ENCODE measurements at regions of chr13 and their contacts with region 1.

Region 1: DNA sequence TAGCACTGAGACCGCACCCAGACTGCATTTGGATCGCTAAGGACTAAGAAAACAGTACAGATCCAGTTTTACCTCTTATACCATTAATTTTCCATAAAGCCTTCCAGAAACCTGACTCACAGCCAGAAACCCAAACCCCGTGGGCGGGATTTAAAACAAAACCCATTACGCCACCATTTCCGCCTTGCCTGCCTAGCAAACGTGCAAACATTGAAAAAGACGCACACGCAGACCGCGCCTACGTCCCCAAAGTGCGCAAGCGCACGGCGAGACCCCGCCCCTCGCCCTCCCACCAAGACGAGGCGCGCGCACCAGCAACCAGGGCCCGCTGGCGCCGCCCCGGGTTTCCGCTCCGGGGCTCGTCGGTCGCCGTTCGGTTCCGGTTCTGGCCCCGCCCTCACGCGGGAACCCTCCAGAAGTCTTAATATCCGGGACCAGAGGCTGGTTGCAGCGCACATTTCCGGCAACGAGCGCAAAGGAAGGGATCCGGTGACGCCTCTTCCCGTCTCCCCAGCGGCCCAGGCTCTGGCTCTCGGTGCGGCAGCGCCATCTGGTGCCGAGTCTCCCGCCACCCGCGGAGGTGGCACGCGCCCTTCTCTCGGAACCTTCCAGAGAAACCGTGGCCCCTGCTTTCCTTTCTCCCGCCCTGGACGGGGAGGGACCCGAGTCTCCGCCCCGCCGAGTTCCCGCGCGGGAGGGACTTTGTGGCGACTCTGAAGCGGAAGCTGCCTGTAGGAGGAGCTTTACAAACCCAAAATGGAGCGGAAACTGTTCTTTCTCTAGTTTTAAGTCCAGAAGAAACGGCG is 256.9 kb upstream of the STARD13 start:
- DNase-seq: peak; percentile 95 to 100 (median 98)
- ATAC-seq: peak; percentile 79
- H3K4me3 ChIP-seq: peak overlapping the region; percentile 69
- H3K4me3 Mint-ChIP-seq: peak overlapping the region; percentile 99
- H3K27ac ChIP-seq: peak overlapping the region; percentile 97 to 98
- H3K27ac Mint-ChIP-seq: peak overlapping the region; percentile 98
- H3K4me1 ChIP-seq: peaks cover 31% of the 10 kb centered on the region
- H3K4me1 Mint-ChIP-seq: peaks cover 56% of the 10 kb centered on the region
- H3K27me3 ChIP-seq: no peaks in the 10 kb centered on the region
- H3K27me3 Mint-ChIP-seq: no peaks in the 10 kb centered on the region
- CTCF ChIP-seq: peak; percentile 84

Region 2: DNA sequence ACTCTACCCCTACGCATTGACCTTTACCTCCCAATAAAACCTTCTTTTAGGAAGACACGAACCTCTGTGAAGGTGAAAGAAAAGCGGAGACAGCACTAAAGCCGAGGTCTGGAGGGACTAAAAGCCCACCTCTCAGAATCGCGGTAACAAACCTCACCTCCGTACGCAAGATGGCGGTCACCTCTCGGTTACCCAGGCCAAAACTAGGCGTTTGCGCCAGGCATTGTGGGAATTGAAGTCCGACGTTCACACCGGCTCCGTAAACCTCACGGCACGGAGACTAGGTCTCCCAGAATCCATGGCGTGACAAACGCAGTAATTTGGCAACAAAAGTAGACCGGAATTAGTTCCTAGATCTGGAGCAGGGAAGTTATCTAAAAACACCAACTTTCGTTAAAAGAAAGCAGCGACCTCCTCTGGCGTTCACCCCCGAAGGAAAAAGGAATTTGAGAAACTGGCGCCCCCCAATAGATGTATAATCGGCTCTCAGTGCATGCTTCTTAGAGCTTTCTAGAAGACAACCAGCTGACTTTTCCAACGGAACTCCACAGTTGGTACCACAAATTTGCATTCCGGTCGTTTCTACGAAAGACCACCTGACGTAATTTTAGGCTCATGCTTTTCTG is 1003.8 kb before region 1 on chr13 and contains the start of gene N4BP2L2:
- CTCF ChIA-PET with region 1: interaction called, 6 read pairs
- POLR2A ChIA-PET with region 1: interaction called, 17 read pairs
- intact Hi-C with region 1: loop called (anchors 2 to 5 kb)
- DNase-seq: peak; percentile 82 to 97 (median 88)
- ATAC-seq: peak; percentile 96
- H3K4me3 ChIP-seq: peak within 1 kb of the TSS; percentile 81
- H3K4me3 Mint-ChIP-seq: peak within 1 kb of the TSS; percentile 100
- H3K27ac ChIP-seq: peak within 1 kb of the TSS; percentile 98
- H3K27ac Mint-ChIP-seq: peak within 1 kb of the TSS; percentile 100
- H3K4me1 ChIP-seq: peaks cover 18% of the 10 kb centered on the region
- H3K4me1 Mint-ChIP-seq: peaks cover 55% of the 10 kb centered on the region
- H3K27me3 ChIP-seq: no peaks in the 10 kb centered on the region
- H3K27me3 Mint-ChIP-seq: peaks cover 5% of the 10 kb centered on the region
- CTCF ChIP-seq: peak; percentile 33
- total RNA-seq, gene N4BP2L2: 171 TPM

Region 3: DNA sequence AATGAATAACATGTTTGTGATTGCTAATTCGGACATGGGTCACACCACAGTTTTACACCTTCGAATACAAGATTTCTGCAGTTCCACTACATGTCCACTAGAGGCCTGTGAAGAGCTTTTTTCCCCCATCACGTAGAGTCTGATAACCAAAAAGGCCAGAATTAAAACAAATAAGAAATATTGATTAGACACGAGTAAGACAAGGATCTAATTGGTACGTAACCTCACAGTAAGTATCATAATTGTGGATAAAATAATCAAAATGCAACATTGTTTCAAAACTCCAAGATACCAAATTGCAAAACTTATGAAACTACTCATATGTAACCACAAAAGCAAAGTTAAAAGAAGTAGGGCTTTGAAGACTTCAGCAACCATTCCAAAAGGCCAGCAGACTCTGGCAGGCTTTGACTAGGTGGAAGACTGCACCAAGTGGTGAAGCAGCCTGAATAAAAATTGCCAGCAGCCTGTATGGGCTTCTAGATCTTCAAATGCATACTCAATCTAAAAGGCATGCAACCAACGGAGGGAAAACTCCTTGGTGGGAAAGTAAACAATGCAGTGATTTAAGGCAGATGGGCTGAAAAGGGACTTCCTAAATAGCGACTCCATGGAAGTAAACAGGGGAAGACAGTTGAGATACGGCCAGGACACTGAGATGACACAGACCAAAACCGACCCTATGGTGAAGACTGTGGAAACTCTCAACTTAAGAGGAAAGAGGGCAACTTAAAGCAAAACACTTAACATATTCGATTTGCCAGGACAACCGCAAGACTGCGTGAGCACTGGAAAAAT is 313.6 kb before region 1 on chr13:
- CTCF ChIA-PET with region 1: interaction called, 3 read pairs
- POLR2A ChIA-PET with region 1: interaction called, 6 read pairs
- intact Hi-C with region 1: loop called (anchors 1 kb)
- DNase-seq: peak in 4 of 14 experiments; percentile 21 to 64 (median 57)
- ATAC-seq: peak; percentile 43
- H3K4me3 ChIP-seq: no peak overlapping the region
- H3K4me3 Mint-ChIP-seq: no peak overlapping the region
- H3K27ac ChIP-seq: no peak overlapping the region
- H3K27ac Mint-ChIP-seq: no peak overlapping the region
- H3K4me1 ChIP-seq: no peaks in the 10 kb centered on the region
- H3K4me1 Mint-ChIP-seq: peaks cover 5% of the 10 kb centered on the region
- H3K27me3 ChIP-seq: no peaks in the 10 kb centered on the region
- H3K27me3 Mint-ChIP-seq: no peaks in the 10 kb centered on the region
- CTCF ChIP-seq: peak; percentile 97

Region 4: GRCh38 chr13:33723772-33724435 is 181.4 kb after region 1 on chr13:
- CTCF ChIA-PET with region 1: interaction called, 5 read pairs
- POLR2A ChIA-PET with region 1: interaction called, 16 read pairs
- intact Hi-C with region 1: loop called (anchors 1 to 5 kb)
- DNase-seq: peak; percentile 27 to 86 (median 50)
- ATAC-seq: peak; percentile 91
- H3K4me3 ChIP-seq: no peak overlapping the region
- H3K4me3 Mint-ChIP-seq: no peak overlapping the region
- H3K27ac ChIP-seq: no peak overlapping the region
- H3K27ac Mint-ChIP-seq: no peak overlapping the region
- H3K4me1 ChIP-seq: peaks cover 4% of the 10 kb centered on the region
- H3K4me1 Mint-ChIP-seq: peaks cover 27% of the 10 kb centered on the region
- H3K27me3 ChIP-seq: no peaks in the 10 kb centered on the region
- H3K27me3 Mint-ChIP-seq: no peaks in the 10 kb centered on the region
- CTCF ChIP-seq: peak; percentile 69

Region 5: GRCh38 chr13:34941835-34942731 is 1399.6 kb after region 1 on chr13 and contains the start of gene NBEA:
- CTCF ChIA-PET with region 1: no interaction called
- POLR2A ChIA-PET with region 1: no interaction called
- intact Hi-C with region 1: loop called in 1 of 2 experiments (anchors 10 kb)
- DNase-seq: peak; percentile 33 to 89 (median 75)
- ATAC-seq: peak; percentile 72
- H3K4me3 ChIP-seq: peak within 1 kb of the TSS; percentile 54
- H3K4me3 Mint-ChIP-seq: peak within 1 kb of the TSS; percentile 95
- H3K27ac ChIP-seq: no peak within 1 kb of the TSS
- H3K27ac Mint-ChIP-seq: peak within 1 kb of the TSS; percentile 64
- H3K4me1 ChIP-seq: peaks cover 13% of the 10 kb centered on the region
- H3K4me1 Mint-ChIP-seq: peaks cover 37% of the 10 kb centered on the region
- H3K27me3 ChIP-seq: peaks cover 7 to 28% of the 10 kb centered on the region in 2 experiments
- H3K27me3 Mint-ChIP-seq: peaks cover 46% of the 10 kb centered on the region
- CTCF ChIP-seq: no peak
- total RNA-seq, gene NBEA: 3.5 to 3.8 TPM